ENCODE measurements at regions of chr4 and their contacts with region 1.

Region 1: GRCh38 chr4:24778464-24779225 is 16.7 kb upstream of the SOD3 start:
- DNase-seq: peak in 1 of 2 donors; percentile 92
- H3K4me3 ChIP-seq: no peak overlapping the region
- H3K27ac ChIP-seq: peak overlapping the region; percentile 77 to 88
- H3K4me1 ChIP-seq: peaks cover 9 to 53% of the 10 kb centered on the region in 2 donors
- H3K27me3 ChIP-seq: no peaks in the 10 kb centered on the region
- CTCF ChIP-seq: no peak

Region 2: GRCh38 chr4:24730256-24731001 is 48.2 kb before region 1 on chr4:
- intact Hi-C with region 1: loop called (anchors 2 kb)
- DNase-seq: peak; percentile 63 to 94
- H3K4me3 ChIP-seq: no peak overlapping the region
- H3K27ac ChIP-seq: peak overlapping the region; percentile 63 to 78
- H3K4me1 ChIP-seq: peaks cover 3 to 40% of the 10 kb centered on the region in 2 donors
- H3K27me3 ChIP-seq: no peaks in the 10 kb centered on the region
- CTCF ChIP-seq: peak in 1 of 3 experiments; percentile 13

Region 3: GRCh38 chr4:24850674-24851073 is 72.0 kb after region 1 on chr4:
- intact Hi-C with region 1: loop called (anchors 5 kb)
- DNase-seq: peak in 1 of 2 donors; percentile 90
- H3K4me3 ChIP-seq: no peak overlapping the region
- H3K27ac ChIP-seq: peak overlapping the region; percentile 69 to 79
- H3K4me1 ChIP-seq: peaks cover 10 to 37% of the 10 kb centered on the region in 2 donors
- H3K27me3 ChIP-seq: no peaks in the 10 kb centered on the region
- CTCF ChIP-seq: no peak

Region 4: DNA sequence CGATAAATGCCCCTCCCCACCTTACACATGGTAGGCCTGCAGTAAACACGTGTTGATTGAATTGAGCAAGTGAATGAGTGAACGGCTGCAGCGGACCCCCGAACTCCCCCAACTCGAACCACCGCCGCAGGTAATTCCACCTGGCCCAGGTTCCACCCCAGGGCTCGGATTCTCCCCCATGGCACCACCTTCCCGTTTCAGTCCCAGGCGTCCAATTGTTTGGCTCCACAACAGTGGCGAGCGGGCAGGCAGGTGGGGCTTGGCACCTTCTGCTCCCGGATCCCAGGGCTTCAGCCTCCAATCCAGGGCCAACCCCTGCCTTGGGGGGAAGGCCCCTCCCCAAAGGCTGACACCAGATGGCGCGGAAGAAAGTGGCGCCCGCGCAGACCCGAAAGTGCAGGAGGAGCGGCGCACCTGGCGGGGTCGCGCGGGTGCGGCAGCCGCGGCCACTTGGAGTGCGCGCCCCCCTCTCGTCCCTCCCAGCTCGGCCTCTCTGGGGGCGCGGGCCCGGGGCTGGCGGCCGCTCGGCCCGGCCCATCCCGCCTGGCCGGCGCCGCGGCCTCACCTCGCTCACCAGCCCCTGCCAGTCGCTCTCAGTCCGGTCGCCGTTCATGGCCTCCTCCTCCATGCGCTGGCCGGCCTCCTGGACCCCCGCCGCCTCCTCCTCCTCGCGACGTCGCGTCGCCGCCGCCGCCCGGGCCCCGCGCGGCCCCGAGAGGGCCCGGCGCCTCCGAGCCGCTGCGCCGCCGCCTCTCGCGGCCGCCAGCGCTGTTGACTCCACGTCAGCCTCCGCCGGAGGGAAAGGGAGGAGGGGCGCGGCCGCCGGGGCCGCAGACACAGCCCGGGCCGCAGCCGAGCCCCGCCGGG is 133.8 kb after region 1 on chr4 and contains the start of gene CCDC149:
- intact Hi-C with region 1: loop called (anchors 5 kb)
- DNase-seq: peak in 1 of 2 donors; percentile 83
- H3K4me3 ChIP-seq: peak within 1 kb of the TSS; percentile 91 to 93
- H3K27ac ChIP-seq: peak within 1 kb of the TSS; percentile 93 to 97
- H3K4me1 ChIP-seq: peaks cover 0 to 8% of the 10 kb centered on the region in 2 donors
- H3K27me3 ChIP-seq: no peaks in the 10 kb centered on the region
- CTCF ChIP-seq: no peak
- total RNA-seq, gene CCDC149: 8.7 TPM

Region 5: DNA sequence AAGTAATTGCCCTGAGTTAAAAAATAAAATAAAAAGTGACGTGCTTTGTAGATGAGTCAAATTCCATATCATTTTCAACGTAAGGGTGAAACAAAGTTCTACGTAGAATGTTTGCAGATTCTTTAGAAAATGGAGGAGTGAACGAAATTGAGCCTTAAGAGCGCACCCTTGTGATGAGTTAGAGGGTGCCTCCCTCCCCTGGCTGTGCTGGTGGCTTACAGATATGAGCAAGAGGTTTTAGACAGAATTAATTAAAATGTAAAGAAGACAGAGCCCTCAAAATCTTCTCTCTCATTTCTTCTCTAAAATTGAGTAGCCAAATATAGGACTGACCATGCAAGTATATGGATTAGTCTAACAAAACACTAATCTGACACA is 282.3 kb after region 1 on chr4:
- intact Hi-C with region 1: loop called (anchors 5 kb)
- DNase-seq: peak in 1 of 2 donors; percentile 58
- H3K4me3 ChIP-seq: no peak overlapping the region
- H3K27ac ChIP-seq: peak overlapping the region; percentile 77
- H3K4me1 ChIP-seq: peaks cover 0 to 7% of the 10 kb centered on the region in 2 donors
- H3K27me3 ChIP-seq: no peaks in the 10 kb centered on the region
- CTCF ChIP-seq: no peak